CD4-positive, alpha-beta memory T cell (primary cell): ENCODE measurements at regions of chr19 and their contacts with region 1.

Region 1: DNA sequence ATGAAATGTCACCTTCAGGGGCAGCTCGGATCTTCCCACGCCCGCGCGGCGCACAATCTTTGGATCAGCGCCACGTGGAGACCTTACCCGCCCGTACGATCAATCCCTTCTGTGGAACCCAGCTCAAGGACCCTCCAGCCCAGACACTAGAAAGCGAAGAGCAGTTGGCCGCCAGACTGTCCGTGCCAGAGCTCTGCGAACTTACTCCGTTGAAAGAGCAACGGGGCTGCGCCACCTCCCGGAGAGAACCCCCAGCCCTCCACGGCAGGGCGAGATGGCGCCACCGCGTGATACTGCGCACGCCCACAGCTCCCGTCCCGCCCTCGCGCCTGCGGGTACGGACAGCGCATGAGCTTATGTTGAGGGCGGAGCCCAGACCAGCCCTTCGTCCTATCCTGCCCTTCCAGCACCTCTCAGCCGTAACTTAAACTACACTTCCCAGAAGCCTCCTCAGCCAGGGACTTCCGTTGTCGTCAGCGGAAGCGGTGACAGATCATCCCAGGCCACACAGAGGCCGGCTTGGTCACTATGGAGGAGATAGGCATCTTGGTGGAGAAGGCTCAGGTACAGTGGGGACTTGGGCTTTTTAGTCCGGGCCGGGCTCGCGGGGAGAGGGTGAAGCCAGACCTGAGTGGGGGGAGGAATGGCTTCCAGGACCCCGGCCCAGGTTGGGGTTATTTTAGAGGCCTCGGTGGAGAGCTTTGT is at the start of gene PSMC4:
- DNase-seq: peak; percentile 98 to 99 (median 98)
- H3K4me3 ChIP-seq: peak within 1 kb of the TSS; percentile 63 to 98
- H3K4me3 Mint-ChIP-seq: peak within 1 kb of the TSS; percentile 94 to 100 (median 96)
- H3K27ac ChIP-seq: peak within 1 kb of the TSS; percentile 94
- H3K27ac Mint-ChIP-seq: peak within 1 kb of the TSS; percentile 91 to 100 (median 99)
- H3K4me1 ChIP-seq: peaks cover 43% of the 10 kb centered on the region
- H3K4me1 Mint-ChIP-seq: peaks cover 41 to 59% (median 50%) of the 10 kb centered on the region in 4 donors
- H3K27me3 ChIP-seq: no peaks in the 10 kb centered on the region
- H3K27me3 Mint-ChIP-seq: no peaks in the 10 kb centered on the region
- total RNA-seq, gene PSMC4: 53.1 to 56.3 TPM

Region 2: GRCh38 chr19:39833464-39834286 is 137.2 kb before region 1 on chr19 and contains the start of gene DYRK1B:
- CTCF ChIA-PET with region 1: interaction called, 16 read pairs
- POLR2A ChIA-PET with region 1: interaction called, 21 read pairs
- intact Hi-C with region 1: loop called (anchors 1 kb)
- DNase-seq: peak; percentile 96 to 98 (median 98)
- H3K4me3 ChIP-seq: peak within 1 kb of the TSS; percentile 81 to 98
- H3K4me3 Mint-ChIP-seq: peak within 1 kb of the TSS; percentile 79 to 90 (median 86)
- H3K27ac ChIP-seq: peak within 1 kb of the TSS; percentile 91
- H3K27ac Mint-ChIP-seq: peak within 1 kb of the TSS; percentile 77 to 99 (median 96)
- H3K4me1 ChIP-seq: peaks cover 30% of the 10 kb centered on the region
- H3K4me1 Mint-ChIP-seq: peaks cover 24 to 39% (median 31%) of the 10 kb centered on the region in 4 donors
- H3K27me3 ChIP-seq: no peaks in the 10 kb centered on the region
- H3K27me3 Mint-ChIP-seq: no peaks in the 10 kb centered on the region
- total RNA-seq, gene DYRK1B: 28.4 to 30.9 TPM

Region 3: DNA sequence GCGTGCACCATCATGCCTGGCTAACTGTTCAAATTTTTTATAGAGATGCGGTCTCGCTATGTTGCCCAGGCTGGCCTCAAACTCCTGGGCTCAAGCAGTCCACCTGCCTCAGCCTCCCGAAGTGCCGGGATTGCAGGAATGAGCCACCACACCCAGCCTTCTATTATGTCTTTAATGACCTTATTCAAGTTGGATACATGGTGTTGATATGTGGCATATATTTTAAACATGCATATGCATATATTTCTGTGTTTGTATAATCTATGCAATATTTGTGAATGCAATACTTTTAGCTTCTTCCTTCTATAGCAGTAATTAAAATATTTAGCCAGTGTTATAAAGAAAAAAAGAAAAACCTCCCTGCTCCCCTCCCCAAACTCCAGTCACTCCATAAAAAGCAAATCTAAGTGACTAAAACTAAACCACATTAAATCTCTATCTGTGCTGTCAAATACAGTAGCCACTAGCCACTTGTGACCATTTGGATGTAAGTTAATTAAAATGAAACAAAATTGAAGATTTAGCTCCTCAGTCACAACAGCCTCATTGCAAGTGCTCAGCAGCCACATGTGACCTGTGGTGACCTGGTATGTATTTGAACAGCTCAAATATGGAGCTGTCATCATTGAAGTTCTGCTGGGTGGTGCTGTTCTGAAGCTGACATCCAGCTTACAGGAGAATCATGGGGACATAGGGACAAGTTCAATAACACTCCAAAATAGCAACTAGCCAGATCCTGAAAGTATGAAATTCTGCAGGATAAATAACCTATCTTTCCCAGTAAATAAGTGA is 63.8 kb before region 1 on chr19:
- CTCF ChIA-PET with region 1: interaction called, 28 read pairs
- POLR2A ChIA-PET with region 1: interaction called, 12 read pairs
- intact Hi-C with region 1: loop called (anchors 5 kb)
- DNase-seq: no peak
- H3K4me3 ChIP-seq: no peak overlapping the region
- H3K4me3 Mint-ChIP-seq: no peak overlapping the region
- H3K27ac ChIP-seq: no peak overlapping the region
- H3K27ac Mint-ChIP-seq: peak overlapping the region in 4 of 7 donors; percentile 9 to 56 (median 38)
- H3K4me1 ChIP-seq: no peaks in the 10 kb centered on the region
- H3K4me1 Mint-ChIP-seq: peaks cover 8 to 14% (median 11%) of the 10 kb centered on the region in 4 donors
- H3K27me3 ChIP-seq: no peaks in the 10 kb centered on the region
- H3K27me3 Mint-ChIP-seq: no peaks in the 10 kb centered on the region

Region 4: GRCh38 chr19:39941615-39942365 is 29.0 kb before region 1 on chr19:
- CTCF ChIA-PET with region 1: interaction called, 151 read pairs
- POLR2A ChIA-PET with region 1: interaction called, 154 read pairs
- intact Hi-C with region 1: loop called (anchors 1 kb)
- DNase-seq: peak; percentile 80 to 88 (median 84)
- H3K4me3 ChIP-seq: peak overlapping the region; percentile 36 to 53
- H3K4me3 Mint-ChIP-seq: peak overlapping the region; percentile 71 to 87 (median 80)
- H3K27ac ChIP-seq: peak overlapping the region; percentile 77
- H3K27ac Mint-ChIP-seq: peak overlapping the region; percentile 83 to 97 (median 92)
- H3K4me1 ChIP-seq: peaks cover 80% of the 10 kb centered on the region
- H3K4me1 Mint-ChIP-seq: peaks cover 50 to 89% (median 69%) of the 10 kb centered on the region in 4 donors
- H3K27me3 ChIP-seq: no peaks in the 10 kb centered on the region
- H3K27me3 Mint-ChIP-seq: no peaks in the 10 kb centered on the region

Region 5: DNA sequence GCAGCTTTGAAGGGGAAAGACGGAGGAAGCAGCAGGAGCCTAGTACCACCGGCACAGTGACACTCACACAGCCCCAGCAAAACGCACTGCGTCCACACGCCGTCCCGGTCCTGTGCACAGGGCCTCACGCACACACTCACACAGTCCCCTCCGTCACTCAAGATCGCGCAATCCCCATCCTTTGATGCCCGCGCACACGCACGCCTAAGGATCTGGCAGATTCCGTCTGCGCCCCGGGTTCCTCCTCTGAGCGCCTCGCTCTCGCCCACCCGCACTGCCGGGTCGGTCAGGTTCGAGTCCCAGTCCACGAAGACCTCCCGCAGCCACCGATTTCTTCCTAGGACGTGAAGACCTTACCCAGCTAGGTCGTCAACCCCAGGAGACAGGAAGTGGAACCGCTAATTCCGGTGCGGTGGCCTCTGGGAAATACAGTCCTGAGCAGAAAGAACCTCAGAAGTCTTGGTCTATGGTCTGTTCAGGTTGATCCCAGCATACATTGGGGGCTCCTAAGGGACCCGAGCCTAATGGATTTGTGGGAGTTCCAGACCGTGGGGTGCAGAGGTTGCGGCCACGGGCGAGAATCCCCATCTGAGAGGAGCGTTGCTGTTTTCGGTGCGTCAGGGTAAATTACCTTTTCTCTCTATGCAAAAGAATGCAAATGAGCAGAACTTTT is 85.1 kb after region 1 on chr19 and contains the start of gene ZNF780B:
- CTCF ChIA-PET with region 1: interaction called, 6 read pairs
- POLR2A ChIA-PET with region 1: interaction called, 14 read pairs
- intact Hi-C with region 1: no loop called
- DNase-seq: peak; percentile 67 to 82 (median 72)
- H3K4me3 ChIP-seq: peak within 1 kb of the TSS; percentile 77
- H3K4me3 Mint-ChIP-seq: peak within 1 kb of the TSS; percentile 98 to 100 (median 99)
- H3K27ac ChIP-seq: peak within 1 kb of the TSS; percentile 72
- H3K27ac Mint-ChIP-seq: peak within 1 kb of the TSS; percentile 90 to 99 (median 97)
- H3K4me1 ChIP-seq: peaks cover 39% of the 10 kb centered on the region
- H3K4me1 Mint-ChIP-seq: peaks cover 38 to 51% (median 46%) of the 10 kb centered on the region in 4 donors
- H3K27me3 ChIP-seq: no peaks in the 10 kb centered on the region
- H3K27me3 Mint-ChIP-seq: peaks cover 0 to 4% of the 10 kb centered on the region in 2 donors
- total RNA-seq, gene ZNF780B: 63.3 to 66.2 TPM

Region 6: GRCh38 chr19:40252395-40252794 is 281.6 kb after region 1 on chr19:
- CTCF ChIA-PET with region 1: no interaction called
- POLR2A ChIA-PET with region 1: no interaction called
- intact Hi-C with region 1: no loop called
- DNase-seq: no peak
- H3K4me3 ChIP-seq: no peak overlapping the region
- H3K4me3 Mint-ChIP-seq: no peak overlapping the region
- H3K27ac ChIP-seq: no peak overlapping the region
- H3K27ac Mint-ChIP-seq: no peak overlapping the region
- H3K4me1 ChIP-seq: no peaks in the 10 kb centered on the region
- H3K4me1 Mint-ChIP-seq: peaks cover 10 to 27% (median 17%) of the 10 kb centered on the region in 4 donors
- H3K27me3 ChIP-seq: no peaks in the 10 kb centered on the region
- H3K27me3 Mint-ChIP-seq: no peaks in the 10 kb centered on the region

Region 7: GRCh38 chr19:40285353-40286234 is 314.8 kb after region 1 on chr19:
- CTCF ChIA-PET with region 1: no interaction called
- POLR2A ChIA-PET with region 1: no interaction called
- intact Hi-C with region 1: loop called (anchors 1 kb)
- DNase-seq: peak; percentile 97 to 100 (median 100)
- H3K4me3 ChIP-seq: peak overlapping the region; percentile 45 to 58
- H3K4me3 Mint-ChIP-seq: peak overlapping the region; percentile 84 to 98 (median 92)
- H3K27ac ChIP-seq: peak overlapping the region; percentile 88
- H3K27ac Mint-ChIP-seq: peak overlapping the region; percentile 93 to 99 (median 98)
- H3K4me1 ChIP-seq: peaks cover 49% of the 10 kb centered on the region
- H3K4me1 Mint-ChIP-seq: peaks cover 26 to 56% (median 40%) of the 10 kb centered on the region in 4 donors
- H3K27me3 ChIP-seq: no peaks in the 10 kb centered on the region
- H3K27me3 Mint-ChIP-seq: no peaks in the 10 kb centered on the region